Activated T-helper 1 cell treated with anti-CD3 and anti-CD28 coated beads, Interleukin-12 subunit alpha, Interleukin-12 subunit beta, Interleukin-2, Interleukin-4 antibody, amounts not matched to agents 30 ng/mL and 10 ng/mL and 1 ng/mL, durations not matched to agents 14 hours and 24 hours and 36 hours (primary cell): ENCODE measurements at regions of chr2 and their contacts with region 1.

Region 1: GRCh38 chr2:64214281-64215115 is 70.3 kb upstream of the PELI1 start:
- DNase-seq: peak; percentile 33
- H3K4me3 Mint-ChIP-seq: peak overlapping the region; percentile 58
- H3K27ac Mint-ChIP-seq: peak overlapping the region; percentile 98
- H3K4me1 Mint-ChIP-seq: peaks cover 66% of the 10 kb centered on the region
- H3K27me3 Mint-ChIP-seq: no peaks in the 10 kb centered on the region

Region 2: DNA sequence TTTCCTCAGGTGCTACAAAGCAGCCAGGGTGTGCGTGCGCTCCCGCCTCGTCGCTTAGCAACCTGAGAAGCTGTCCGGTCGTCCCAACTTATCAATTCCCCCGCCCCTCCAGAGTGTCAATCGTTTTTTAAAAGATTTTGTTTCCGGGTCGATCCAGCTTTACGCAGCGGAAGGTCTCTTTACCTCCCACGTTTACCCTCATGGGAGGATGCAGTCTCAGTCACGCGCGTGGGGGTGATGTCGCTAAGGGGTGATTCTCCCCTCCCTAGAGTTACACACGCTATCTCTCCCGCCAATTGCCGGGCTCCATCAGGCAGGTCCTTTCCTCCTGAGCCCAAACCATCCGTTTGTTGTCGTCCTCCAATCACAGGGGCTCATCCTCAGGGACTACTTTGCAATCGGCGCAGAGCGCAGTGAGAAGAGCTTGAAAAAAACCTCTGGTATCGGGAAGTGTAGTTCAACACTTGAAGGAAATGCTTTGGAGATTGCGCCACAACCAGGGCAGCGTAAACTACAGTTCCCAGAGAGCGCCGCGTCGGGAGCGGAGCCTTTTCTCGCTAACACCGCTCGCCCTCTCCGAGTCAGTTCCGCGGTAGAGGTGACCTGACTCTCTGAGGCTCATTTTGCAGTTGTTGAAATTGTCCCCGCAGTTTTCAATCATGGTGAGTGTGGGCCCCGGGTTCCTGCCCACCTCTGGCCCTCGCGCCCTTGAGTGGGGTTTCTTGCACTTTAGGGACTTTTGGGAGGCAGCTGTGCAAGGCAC is 625.9 kb before region 1 on chr2 and contains the starts of genes MDH1 and WDPCP:
- intact Hi-C with region 1: loop called (anchors 5 kb)
- DNase-seq: peak; percentile 90
- H3K4me3 Mint-ChIP-seq: peak within 1 kb of the TSS; percentile 97
- H3K27ac Mint-ChIP-seq: peak within 1 kb of the TSS; percentile 90
- H3K4me1 Mint-ChIP-seq: peaks cover 38% of the 10 kb centered on the region
- H3K27me3 Mint-ChIP-seq: no peaks in the 10 kb centered on the region
- total RNA-seq, gene MDH1: 186 and 197 TPM in 2 replicates
- total RNA-seq, gene WDPCP: 5.2 and 7.7 TPM in 2 replicates

Region 3: DNA sequence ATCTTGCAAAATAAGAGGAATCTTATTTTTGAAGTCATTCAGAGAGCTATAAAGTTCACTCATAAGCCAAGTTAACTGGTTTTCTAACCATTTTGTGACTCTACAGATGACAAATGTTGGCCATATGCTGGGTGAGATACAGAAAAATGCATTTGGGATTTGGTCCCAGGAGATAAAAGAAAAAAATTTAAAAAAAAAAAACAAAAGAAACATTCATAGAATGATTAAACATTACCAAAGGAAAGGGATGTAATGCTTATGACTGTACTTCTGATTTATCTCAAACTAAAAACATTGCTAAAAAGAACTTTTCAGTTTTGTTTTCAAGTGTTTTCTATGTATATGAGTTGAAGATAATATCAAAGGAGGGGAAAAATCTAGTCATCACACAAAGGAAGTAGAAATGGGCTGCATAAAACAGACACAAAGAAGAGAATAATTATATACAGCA is 113.3 kb before region 1 on chr2:
- intact Hi-C with region 1: loop called (anchors 1 kb)
- DNase-seq: no peak
- H3K4me3 Mint-ChIP-seq: no peak overlapping the region
- H3K27ac Mint-ChIP-seq: peak overlapping the region; percentile 76
- H3K4me1 Mint-ChIP-seq: peaks cover 54% of the 10 kb centered on the region
- H3K27me3 Mint-ChIP-seq: no peaks in the 10 kb centered on the region

Region 4: DNA sequence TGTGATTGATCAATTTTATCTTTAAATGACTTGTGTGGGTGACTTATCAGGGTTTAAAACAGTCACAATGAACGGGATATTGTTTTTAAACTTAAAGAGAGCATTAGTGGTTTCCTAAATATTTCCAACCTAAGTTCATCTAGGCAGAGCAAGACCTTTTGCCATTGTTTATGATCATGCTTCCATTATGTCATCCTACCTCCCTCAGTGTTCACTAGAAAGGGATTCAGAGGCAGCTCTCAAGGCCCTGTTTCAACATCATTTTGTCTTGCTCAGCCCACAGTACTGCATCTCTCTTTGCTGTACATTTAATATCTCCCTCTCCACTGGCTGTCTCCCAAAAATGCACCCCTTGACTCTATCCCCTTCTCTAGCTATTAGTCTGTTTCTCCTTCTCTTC is 48.8 kb before region 1 on chr2:
- intact Hi-C with region 1: loop called (anchors 1 kb)
- DNase-seq: no peak
- H3K4me3 Mint-ChIP-seq: no peak overlapping the region
- H3K27ac Mint-ChIP-seq: no peak overlapping the region
- H3K4me1 Mint-ChIP-seq: no peaks in the 10 kb centered on the region
- H3K27me3 Mint-ChIP-seq: no peaks in the 10 kb centered on the region

Region 5: GRCh38 chr2:64338910-64339500 is 124.5 kb after region 1 on chr2:
- intact Hi-C with region 1: no loop called
- DNase-seq: no peak
- H3K4me3 Mint-ChIP-seq: no peak overlapping the region
- H3K27ac Mint-ChIP-seq: no peak overlapping the region
- H3K4me1 Mint-ChIP-seq: no peaks in the 10 kb centered on the region
- H3K27me3 Mint-ChIP-seq: peaks cover 16% of the 10 kb centered on the region

Region 6: GRCh38 chr2:64439194-64439593 is 224.7 kb after region 1 on chr2:
- intact Hi-C with region 1: no loop called
- DNase-seq: no peak
- H3K4me3 Mint-ChIP-seq: no peak overlapping the region
- H3K27ac Mint-ChIP-seq: no peak overlapping the region
- H3K4me1 Mint-ChIP-seq: no peaks in the 10 kb centered on the region
- H3K27me3 Mint-ChIP-seq: peaks cover 20% of the 10 kb centered on the region

Region 7: GRCh38 chr2:64538764-64539433 is 324.4 kb after region 1 on chr2:
- intact Hi-C with region 1: loop called (anchors 5 kb)
- DNase-seq: no peak
- H3K4me3 Mint-ChIP-seq: peak overlapping the region; percentile 45
- H3K27ac Mint-ChIP-seq: peak overlapping the region; percentile 71
- H3K4me1 Mint-ChIP-seq: peaks cover 74% of the 10 kb centered on the region
- H3K27me3 Mint-ChIP-seq: no peaks in the 10 kb centered on the region

Region 8: DNA sequence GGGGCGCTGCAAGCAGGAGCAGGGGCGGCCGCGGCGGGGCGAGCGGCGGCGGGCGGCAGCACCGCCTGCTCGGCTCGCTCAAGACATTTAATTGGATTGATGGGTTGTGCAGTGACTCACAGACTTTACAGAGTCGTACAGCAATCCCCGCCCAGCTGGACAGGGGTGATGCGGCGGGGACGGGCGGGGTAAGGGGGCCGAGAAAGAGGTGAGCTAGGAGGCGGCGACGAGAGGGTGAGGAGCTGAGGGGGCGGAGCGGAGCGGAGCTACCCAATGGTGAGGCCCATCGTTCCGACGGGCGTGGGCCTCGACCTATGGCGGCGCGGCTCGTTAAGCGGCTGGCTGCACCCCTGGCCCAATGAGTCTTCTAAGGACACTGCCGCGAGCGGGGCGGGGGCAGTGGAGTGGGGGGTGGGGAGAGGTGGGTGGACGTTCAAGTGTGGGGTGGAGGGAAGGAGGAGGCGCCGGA is 536.4 kb after region 1 on chr2:
- intact Hi-C with region 1: loop called (anchors 5 kb)
- DNase-seq: peak; percentile 97
- H3K4me3 Mint-ChIP-seq: peak overlapping the region; percentile 91
- H3K27ac Mint-ChIP-seq: peak overlapping the region; percentile 98
- H3K4me1 Mint-ChIP-seq: peaks cover 34% of the 10 kb centered on the region
- H3K27me3 Mint-ChIP-seq: no peaks in the 10 kb centered on the region